ENCODE measurements at regions of chr6 and their contacts with region 1.

Region 1: DNA sequence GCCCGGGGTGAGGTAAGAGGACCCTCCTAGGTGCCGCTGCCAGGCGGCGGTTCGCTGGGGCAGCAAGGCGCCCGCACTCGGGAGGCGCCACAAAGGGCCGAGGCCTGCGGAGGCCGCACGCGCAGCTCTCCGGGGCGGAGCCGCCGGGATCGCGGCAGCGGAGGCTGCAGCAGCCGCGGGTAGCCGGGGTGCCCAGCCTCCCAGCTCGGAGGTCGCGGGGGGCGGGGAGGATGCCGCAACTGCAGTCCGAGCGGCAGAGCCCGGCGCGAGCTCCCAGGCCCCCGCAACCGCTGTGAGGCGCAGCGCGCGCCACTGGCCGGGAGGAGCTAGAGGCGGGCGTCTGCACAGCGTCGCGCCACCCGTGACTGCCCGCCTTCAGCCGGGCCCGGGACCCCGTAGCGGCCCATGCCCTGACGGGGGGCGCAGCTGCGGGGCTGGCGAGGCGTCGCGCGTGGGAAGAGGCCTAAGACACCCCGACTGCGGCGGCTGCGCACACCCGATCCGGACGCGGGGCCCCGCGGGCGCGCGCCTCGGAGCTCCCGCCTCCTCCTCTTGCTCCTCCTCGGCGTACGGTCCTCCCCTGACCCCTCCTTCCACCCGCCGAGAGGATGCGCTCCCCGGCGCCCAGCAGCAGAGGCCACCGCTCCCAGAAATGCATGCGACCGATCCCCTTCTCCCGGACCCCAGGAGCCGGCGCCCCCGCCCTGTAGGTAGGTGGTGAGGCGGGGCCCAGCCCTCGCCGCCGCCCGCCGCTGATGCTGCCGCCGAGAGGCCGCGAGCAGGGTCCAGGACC is at the start of gene NCOA7:
- DNase-seq: peak; percentile 71 to 87 (median 80)
- H3K4me3 ChIP-seq: peak within 1 kb of the TSS; percentile 71
- H3K4me3 Mint-ChIP-seq: peak within 1 kb of the TSS; percentile 93 to 100 (median 95)
- H3K27ac ChIP-seq: peak within 1 kb of the TSS; percentile 84
- H3K27ac Mint-ChIP-seq: peak within 1 kb of the TSS; percentile 97 to 100 (median 98)
- H3K4me1 ChIP-seq: peaks cover 41% of the 10 kb centered on the region
- H3K4me1 Mint-ChIP-seq: peaks cover 52 to 67% (median 58%) of the 10 kb centered on the region in 3 donors
- H3K27me3 ChIP-seq: no peaks in the 10 kb centered on the region
- H3K27me3 Mint-ChIP-seq: peaks cover 0 to 1% of the 10 kb centered on the region in 2 donors
- total RNA-seq, gene NCOA7: 54.7 to 62.5 TPM

Region 2: GRCh38 chr6:125658759-125659431 is 131.7 kb before region 1 on chr6:
- CTCF ChIA-PET with region 1: no interaction called
- POLR2A ChIA-PET with region 1: no interaction called
- DNase-seq: no peak
- H3K4me3 ChIP-seq: no peak overlapping the region
- H3K4me3 Mint-ChIP-seq: no peak overlapping the region
- H3K27ac ChIP-seq: no peak overlapping the region
- H3K27ac Mint-ChIP-seq: no peak overlapping the region
- H3K4me1 ChIP-seq: no peaks in the 10 kb centered on the region
- H3K4me1 Mint-ChIP-seq: peaks cover 0 to 7% (median 0%) of the 10 kb centered on the region in 3 donors
- H3K27me3 ChIP-seq: no peaks in the 10 kb centered on the region
- H3K27me3 Mint-ChIP-seq: peaks cover 2 to 22% of the 10 kb centered on the region in 2 donors

Region 3: DNA sequence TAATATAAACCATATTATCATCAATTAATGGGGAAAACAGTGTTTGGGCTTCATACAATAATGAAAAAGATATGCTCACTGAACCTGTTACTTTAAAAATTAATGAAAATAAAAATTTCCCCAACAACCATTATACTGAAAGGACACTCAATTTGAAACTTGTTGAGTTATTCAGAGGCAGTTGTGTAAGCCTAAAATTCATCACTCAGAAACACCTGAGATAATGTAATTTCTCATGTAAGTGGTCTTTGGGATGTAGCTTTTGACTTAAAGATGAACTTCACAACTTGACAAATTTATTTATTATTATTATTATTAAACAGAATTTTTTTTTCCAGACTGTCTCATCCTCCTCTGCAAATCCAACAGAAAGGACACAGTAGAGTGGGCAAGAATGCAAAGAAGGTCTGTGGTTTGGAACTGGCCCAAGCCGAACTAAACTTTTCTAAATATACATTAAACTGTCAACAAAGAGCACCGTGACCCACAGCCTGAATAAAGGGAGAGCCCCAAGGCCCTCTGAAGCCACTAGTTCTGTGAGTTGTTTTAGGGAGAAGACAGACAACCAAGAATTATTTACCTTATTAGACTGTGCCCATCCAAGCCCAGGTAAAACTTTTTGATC is 73.3 kb before region 1 on chr6:
- CTCF ChIA-PET with region 1: no interaction called
- POLR2A ChIA-PET with region 1: no interaction called
- DNase-seq: no peak
- H3K4me3 ChIP-seq: no peak overlapping the region
- H3K4me3 Mint-ChIP-seq: no peak overlapping the region
- H3K27ac ChIP-seq: no peak overlapping the region
- H3K27ac Mint-ChIP-seq: no peak overlapping the region
- H3K4me1 ChIP-seq: no peaks in the 10 kb centered on the region
- H3K4me1 Mint-ChIP-seq: peaks cover 0 to 5% (median 0%) of the 10 kb centered on the region in 3 donors
- H3K27me3 ChIP-seq: no peaks in the 10 kb centered on the region
- H3K27me3 Mint-ChIP-seq: peaks cover 6 to 17% of the 10 kb centered on the region in 2 donors

Region 4: GRCh38 chr6:125802943-125803377 is 12.4 kb after region 1 on chr6:
- CTCF ChIA-PET with region 1: interaction called, 10 read pairs
- POLR2A ChIA-PET with region 1: no interaction called
- DNase-seq: no peak
- H3K4me3 ChIP-seq: no peak overlapping the region
- H3K4me3 Mint-ChIP-seq: peak overlapping the region in 1 of 7 donors; percentile 30
- H3K27ac ChIP-seq: no peak overlapping the region
- H3K27ac Mint-ChIP-seq: peak overlapping the region; percentile 11 to 94 (median 67)
- H3K4me1 ChIP-seq: peaks cover 6% of the 10 kb centered on the region
- H3K4me1 Mint-ChIP-seq: peaks cover 58 to 88% (median 69%) of the 10 kb centered on the region in 3 donors
- H3K27me3 ChIP-seq: no peaks in the 10 kb centered on the region
- H3K27me3 Mint-ChIP-seq: no peaks in the 10 kb centered on the region

Region 5: GRCh38 chr6:125834348-125834747 is 43.8 kb after region 1 on chr6:
- CTCF ChIA-PET with region 1: interaction called, 40 read pairs
- POLR2A ChIA-PET with region 1: interaction called, 32 read pairs
- DNase-seq: peak in 1 of 5 donors; percentile 29
- H3K4me3 ChIP-seq: no peak overlapping the region
- H3K4me3 Mint-ChIP-seq: peak overlapping the region; percentile 34 to 76 (median 57)
- H3K27ac ChIP-seq: no peak overlapping the region
- H3K27ac Mint-ChIP-seq: peak overlapping the region; percentile 43 to 94 (median 86)
- H3K4me1 ChIP-seq: peaks cover 45% of the 10 kb centered on the region
- H3K4me1 Mint-ChIP-seq: peaks cover 60 to 89% (median 86%) of the 10 kb centered on the region in 3 donors
- H3K27me3 ChIP-seq: no peaks in the 10 kb centered on the region
- H3K27me3 Mint-ChIP-seq: no peaks in the 10 kb centered on the region

Region 6: DNA sequence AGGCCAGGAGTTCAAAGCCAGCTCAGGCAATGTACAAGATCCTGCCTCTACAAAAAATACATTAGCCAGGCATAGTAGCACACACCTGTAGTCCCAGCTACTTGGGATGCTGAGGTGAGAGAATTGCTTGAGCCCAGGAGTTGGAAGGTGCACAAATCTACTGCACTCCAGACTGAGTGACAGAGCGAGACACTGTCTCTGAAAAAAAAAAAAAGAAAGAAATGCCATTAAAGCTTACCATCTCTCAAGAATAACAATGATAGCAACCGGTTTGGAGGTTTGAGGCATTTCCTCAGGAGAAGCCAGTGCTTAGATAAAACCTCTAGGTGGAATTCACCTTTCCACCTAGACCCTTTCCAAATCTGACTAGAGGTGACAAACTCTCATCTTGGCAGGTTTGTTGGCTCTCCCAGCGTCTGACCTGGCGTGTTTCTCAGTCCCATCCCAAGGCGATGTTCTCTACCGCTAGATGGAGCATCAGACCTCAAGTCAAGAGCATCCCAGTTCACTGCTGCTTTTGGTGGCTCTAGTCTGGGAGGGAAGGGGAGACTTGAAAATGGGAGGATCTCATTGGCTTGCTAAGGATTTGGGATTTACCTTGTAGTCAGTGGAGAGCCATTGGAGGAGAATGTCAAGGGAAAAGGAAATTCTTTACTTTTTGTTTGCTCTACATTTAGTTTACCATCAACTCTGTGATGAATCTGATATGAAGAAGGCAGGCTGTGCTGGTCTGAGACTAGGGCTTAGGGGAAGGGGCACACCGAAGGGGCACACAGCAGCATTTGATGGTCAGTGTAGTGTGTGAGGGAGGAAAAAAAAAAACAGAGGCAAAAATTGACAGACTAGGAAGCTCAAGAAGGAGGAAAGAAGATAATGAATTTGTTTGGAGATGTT is 68.1 kb after region 1 on chr6:
- CTCF ChIA-PET with region 1: interaction called, 11 read pairs
- POLR2A ChIA-PET with region 1: interaction called, 3 read pairs
- DNase-seq: peak in 1 of 5 donors; percentile 47
- H3K4me3 ChIP-seq: no peak overlapping the region
- H3K4me3 Mint-ChIP-seq: no peak overlapping the region
- H3K27ac ChIP-seq: no peak overlapping the region
- H3K27ac Mint-ChIP-seq: peak overlapping the region in 7 of 8 donors; percentile 18 to 64 (median 37)
- H3K4me1 ChIP-seq: no peaks in the 10 kb centered on the region
- H3K4me1 Mint-ChIP-seq: peaks cover 7 to 33% (median 18%) of the 10 kb centered on the region in 3 donors
- H3K27me3 ChIP-seq: no peaks in the 10 kb centered on the region
- H3K27me3 Mint-ChIP-seq: peaks cover 0 to 1% of the 10 kb centered on the region in 2 donors

Region 7: GRCh38 chr6:125918681-125919566 is 128.4 kb after region 1 on chr6:
- CTCF ChIA-PET with region 1: interaction called, 15 read pairs
- POLR2A ChIA-PET with region 1: interaction called, 10 read pairs
- DNase-seq: peak in 4 of 5 donors; percentile 32 to 65 (median 44)
- H3K4me3 ChIP-seq: peak overlapping the region; percentile 38
- H3K4me3 Mint-ChIP-seq: peak overlapping the region; percentile 25 to 74 (median 59)
- H3K27ac ChIP-seq: peak overlapping the region; percentile 60
- H3K27ac Mint-ChIP-seq: peak overlapping the region; percentile 85 to 96 (median 90)
- H3K4me1 ChIP-seq: peaks cover 9% of the 10 kb centered on the region
- H3K4me1 Mint-ChIP-seq: peaks cover 22 to 30% (median 25%) of the 10 kb centered on the region in 3 donors
- H3K27me3 ChIP-seq: no peaks in the 10 kb centered on the region
- H3K27me3 Mint-ChIP-seq: no peaks in the 10 kb centered on the region

Region 8: DNA sequence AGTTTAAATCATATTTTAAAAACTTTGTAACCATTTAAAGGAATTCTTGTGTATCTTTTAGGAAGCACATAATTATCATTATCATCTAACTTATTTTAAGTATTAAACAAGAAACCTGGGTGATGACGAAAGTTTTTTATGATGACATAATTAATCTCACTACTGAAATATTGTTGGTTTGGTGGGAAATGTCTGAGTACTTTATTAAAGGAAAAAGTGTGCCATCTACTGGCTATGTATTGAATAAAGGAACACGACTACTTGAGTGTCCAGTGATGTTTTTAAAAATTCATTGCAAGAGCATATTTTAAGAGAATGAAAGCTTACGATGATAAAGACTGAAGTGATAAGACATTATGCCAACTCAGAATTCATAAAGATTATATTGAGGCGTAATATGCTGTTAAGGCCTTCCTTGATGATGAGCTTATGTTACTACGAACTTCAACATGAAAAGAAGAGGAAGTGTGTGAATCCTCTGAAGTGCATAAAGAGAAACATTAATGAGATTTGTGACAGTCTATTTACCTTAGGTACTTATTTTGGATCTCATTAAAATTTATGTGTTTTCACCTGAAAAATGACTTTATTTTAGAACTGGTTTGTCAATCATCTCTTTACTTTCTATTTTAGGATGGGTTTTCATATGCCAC is 183.8 kb after region 1 on chr6:
- CTCF ChIA-PET with region 1: interaction called, 10 read pairs
- POLR2A ChIA-PET with region 1: interaction called, 3 read pairs
- DNase-seq: peak in 2 of 5 donors; percentile 28 to 40
- H3K4me3 ChIP-seq: no peak overlapping the region
- H3K4me3 Mint-ChIP-seq: no peak overlapping the region
- H3K27ac ChIP-seq: no peak overlapping the region
- H3K27ac Mint-ChIP-seq: peak overlapping the region in 1 of 8 donors; percentile 26
- H3K4me1 ChIP-seq: no peaks in the 10 kb centered on the region
- H3K4me1 Mint-ChIP-seq: peaks cover 9 to 15% (median 12%) of the 10 kb centered on the region in 3 donors
- H3K27me3 ChIP-seq: no peaks in the 10 kb centered on the region
- H3K27me3 Mint-ChIP-seq: no peaks in the 10 kb centered on the region